ENCODE measurements at regions of chr3 and their contacts with region 1.

Region 1: DNA sequence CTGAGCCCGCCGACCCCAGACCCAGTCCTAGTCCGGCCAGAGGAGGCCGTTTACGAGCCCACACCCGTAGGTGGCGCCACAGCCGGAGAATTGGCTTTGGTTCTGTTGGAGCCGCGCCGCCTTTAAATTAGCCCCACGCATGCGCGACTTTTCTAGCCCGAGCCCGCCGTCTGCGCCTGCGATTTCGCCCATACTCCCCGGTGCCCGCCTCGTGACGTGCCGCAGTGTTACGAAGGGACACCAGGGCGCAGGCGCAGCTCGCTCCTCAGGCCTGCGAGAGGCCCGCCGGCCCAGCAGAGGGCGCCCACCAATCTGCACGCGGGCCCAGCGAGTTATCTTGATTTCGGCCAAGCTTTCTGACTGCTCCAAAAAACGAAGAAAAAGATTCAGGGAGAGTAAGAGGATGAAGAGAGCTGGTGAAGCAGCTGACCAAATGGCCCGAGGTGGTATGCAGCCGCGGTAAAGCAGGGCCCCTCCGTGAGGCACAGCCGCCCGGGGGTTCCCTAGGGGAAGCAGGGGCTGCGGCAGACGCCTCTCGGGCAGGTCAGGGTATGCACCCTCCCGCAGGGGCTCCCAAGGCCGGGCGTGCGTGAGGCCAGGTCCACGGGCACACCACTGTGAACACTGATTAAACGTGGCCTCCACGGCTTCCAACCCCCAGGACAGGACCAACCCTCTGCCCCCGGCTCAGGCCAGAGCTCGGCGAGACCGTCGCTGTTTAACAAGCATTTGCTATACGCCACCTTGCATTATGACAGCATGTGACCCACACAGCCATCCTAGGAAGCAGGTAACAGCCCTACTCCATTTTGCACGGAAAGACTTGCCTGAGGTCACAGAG is 32.8 kb downstream of the RPN1 start:
- DNase-seq: peak; percentile 99

Region 2: DNA sequence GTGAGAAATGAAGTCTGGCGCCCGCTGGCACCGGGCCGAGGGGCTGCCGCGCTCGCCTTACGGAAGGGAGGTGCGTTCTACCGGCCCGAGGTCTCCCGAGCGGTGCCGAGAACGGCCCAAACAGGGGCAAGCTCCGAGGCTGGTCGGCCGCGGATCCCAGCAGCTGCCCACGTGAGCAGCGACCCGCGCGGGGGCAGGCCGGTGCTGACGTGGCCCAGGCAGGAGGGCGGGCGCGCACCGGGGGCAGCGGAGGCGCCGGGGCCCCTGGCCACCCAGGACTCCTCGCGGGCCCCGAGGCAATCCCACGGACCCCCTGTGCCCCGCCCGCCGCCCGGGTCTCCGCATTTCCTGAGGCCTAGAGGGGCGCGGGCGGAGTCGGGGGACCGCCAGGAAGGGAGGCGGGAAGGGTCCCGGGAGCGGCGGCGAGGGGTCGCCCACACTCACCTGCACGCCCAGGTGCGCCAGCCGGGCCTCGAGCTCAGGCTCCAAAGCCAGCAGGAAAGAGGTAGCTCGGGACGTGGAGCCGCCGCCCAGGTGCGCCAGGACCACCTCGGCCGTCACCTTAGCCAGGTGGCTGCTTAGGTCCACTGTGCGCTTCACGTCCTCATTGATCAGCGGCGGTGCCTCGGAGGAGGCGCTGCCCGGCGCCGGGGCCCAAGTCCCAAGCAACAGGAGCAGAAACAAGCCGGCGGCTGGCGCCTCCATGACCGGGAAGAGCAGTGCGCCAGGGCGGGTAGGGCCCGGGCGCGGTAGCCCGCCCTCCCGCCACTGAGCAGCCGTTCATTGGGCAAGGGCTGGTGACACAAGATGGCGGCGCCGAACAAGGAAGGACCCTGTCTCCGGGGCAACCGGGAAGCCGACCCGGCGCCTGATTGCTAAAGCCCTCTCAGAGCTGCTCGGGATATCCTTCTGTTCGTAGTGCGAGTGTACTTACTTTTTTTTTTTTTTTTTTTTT is 32.6 kb after region 1 on chr3 and contains the start of gene RPN1:
- intact Hi-C with region 1: loop called (anchors 5 kb)
- DNase-seq: peak; percentile 99
- total RNA-seq, gene RPN1: 84.9 TPM

Region 3: DNA sequence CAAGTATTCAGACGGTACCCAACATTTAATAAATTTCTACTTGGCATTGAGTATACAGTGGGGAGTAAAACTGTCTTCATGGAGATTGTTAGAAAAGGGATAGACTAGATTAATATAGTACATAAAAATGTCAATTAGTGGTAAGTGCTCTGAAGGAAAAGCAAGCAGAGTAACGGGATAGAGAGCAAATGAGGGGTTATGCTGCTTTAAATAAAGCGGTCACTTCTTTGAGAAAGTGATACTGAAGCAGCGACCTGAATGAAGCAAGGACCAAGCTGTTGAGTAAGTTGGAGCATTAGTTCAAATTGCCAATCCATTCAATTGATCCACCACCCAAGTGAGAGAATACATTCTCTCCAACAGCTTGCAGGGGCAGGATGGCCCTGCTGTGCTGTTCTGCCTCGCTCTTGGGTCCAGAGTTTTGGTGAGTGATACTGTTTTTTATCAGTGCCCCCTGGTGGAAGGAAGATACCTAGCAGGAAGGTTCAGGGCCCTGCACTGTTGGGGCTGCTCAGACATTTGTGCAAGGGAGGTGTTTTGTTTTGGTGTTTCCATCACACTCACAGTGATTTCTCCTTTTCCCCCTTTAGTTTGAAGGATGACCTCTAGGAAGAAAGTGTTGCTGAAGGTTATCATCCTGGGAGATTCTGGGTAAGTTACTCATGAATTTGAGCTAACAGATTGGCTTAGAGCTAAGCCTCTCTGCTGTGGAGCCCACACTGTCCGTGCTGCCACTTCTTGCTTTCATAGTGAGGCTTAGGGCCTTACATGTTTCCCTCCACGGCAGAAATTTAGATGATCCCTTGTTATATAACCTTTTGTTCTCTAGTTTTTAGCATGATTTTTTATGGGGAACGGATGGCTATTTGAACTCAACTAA is 177.2 kb after region 1 on chr3:
- intact Hi-C with region 1: loop called (anchors 5 kb)
- DNase-seq: no peak

Region 4: GRCh38 chr3:128845778-128846485 is 228.2 kb after region 1 on chr3:
- intact Hi-C with region 1: loop called (anchors 5 kb)
- DNase-seq: peak; percentile 94

Region 5: DNA sequence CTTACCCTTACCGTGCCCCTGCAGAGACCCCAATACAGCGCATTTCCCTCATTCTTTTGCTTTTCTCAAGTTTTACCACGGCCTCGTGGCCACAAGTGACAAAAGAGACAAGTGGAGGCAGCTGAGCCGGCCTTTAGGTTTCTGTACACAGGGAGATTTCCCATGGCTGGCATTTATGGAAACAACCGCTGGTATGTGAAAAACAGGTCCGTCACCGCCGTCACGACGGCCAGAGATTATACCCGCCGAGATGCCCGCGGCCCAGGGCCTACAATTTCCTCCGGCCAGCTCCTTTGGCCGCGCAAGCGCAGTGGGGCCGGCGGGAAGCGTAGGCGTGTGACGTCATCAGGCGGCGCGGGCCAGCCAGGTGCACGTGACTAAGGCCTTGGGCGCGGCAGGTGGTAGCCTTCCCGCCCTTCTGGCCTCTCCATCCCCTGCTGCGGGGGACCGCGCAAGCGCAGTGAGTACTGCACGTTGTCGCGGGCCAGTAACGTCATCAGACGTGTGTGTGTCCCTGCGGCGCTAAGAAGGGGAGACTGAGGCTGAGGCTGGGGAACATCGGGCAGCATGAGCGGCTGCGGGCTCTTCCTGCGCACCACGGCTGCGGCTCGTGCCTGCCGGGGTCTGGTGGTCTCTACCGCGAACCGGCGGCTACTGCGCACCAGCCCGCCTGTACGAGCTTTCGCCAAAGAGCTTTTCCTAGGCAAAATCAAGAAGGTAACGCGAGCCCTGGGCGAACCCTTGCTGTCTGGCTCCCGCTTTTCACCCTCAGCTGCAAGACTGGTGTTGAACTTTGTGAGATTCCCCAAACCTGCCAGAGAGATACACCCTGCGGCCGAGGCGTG is 261.6 kb after region 1 on chr3 and contains the start of gene ACAD9:
- intact Hi-C with region 1: loop called (anchors 2 kb)
- DNase-seq: peak; percentile 98
- total RNA-seq, gene ACAD9: 29.3 TPM

Measured in cardiac septum (tissue), 1 donor.